CD8-positive, alpha-beta T cell (primary cell): ENCODE measurements at regions of chr1 and their contacts with region 1.

Region 1: DNA sequence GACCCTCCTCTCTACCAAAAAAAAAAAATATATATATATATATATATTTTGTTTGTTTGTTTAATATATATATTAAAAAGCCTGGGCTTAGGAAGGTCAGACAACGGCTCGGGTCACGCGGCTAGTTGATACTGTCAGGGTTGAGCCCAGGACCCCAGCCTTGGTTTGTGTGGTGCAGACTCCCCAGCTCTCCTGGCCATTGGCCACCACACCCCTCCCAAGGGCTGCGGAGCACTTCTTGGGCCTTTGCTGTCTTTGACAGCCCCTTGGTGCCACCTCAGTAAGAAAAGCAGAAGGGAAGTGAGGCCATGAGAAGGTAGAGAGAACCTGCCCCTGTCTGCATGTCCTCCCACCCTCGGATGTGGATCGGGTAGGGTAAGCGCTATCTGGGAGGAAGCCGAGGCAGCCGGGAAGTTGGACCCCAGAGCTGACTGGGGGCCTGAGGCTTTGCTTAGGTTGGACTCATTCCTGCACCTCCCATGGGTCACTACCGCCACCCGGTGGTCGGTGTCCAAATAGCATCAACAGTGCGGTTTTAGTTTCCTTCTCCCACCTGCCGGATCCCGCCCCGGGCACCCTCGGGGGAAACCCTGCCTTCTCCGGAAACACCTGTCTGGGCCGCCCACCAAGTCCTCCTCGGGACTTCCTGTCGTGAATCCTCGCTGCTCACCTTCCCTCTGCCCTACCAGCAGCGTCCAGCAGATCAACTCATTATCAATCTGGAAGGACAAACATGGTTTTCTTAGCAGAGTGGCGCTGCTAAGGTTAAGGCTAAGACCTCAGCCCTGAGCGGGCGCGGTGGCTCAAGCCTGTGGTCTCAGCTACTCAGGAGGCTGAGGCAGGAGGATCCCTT is 29.8 kb upstream of the GNPAT start:
- DNase-seq: peak; percentile 76 to 96 (median 90)
- ATAC-seq: peak; percentile 96
- H3K4me3 ChIP-seq: peak overlapping the region; percentile 42 to 52
- H3K4me3 Mint-ChIP-seq: peak overlapping the region; percentile 83
- H3K27ac ChIP-seq: no peak overlapping the region
- H3K27ac Mint-ChIP-seq: peak overlapping the region; percentile 73
- H3K4me1 ChIP-seq: peaks cover 19% of the 10 kb centered on the region
- H3K4me1 Mint-ChIP-seq: peaks cover 28% of the 10 kb centered on the region
- H3K27me3 ChIP-seq: no peaks in the 10 kb centered on the region
- H3K27me3 Mint-ChIP-seq: no peaks in the 10 kb centered on the region
- CTCF ChIP-seq: peak; percentile 93

Region 2: GRCh38 chr1:230797942-230798418 is 413.3 kb before region 1 on chr1:
- CTCF ChIA-PET with region 1: no interaction called
- POLR2A ChIA-PET with region 1: no interaction called
- intact Hi-C with region 1: loop called (anchors 2 to 5 kb)
- DNase-seq: peak in 2 of 9 experiments; percentile 11 to 21
- ATAC-seq: no peak
- H3K4me3 ChIP-seq: no peak overlapping the region
- H3K4me3 Mint-ChIP-seq: no peak overlapping the region
- H3K27ac ChIP-seq: no peak overlapping the region
- H3K27ac Mint-ChIP-seq: no peak overlapping the region
- H3K4me1 ChIP-seq: no peaks in the 10 kb centered on the region
- H3K4me1 Mint-ChIP-seq: no peaks in the 10 kb centered on the region
- H3K27me3 ChIP-seq: no peaks in the 10 kb centered on the region
- H3K27me3 Mint-ChIP-seq: peaks cover 27% of the 10 kb centered on the region
- CTCF ChIP-seq: no peak

Region 3: GRCh38 chr1:230849451-230850224 is 361.6 kb before region 1 on chr1:
- CTCF ChIA-PET with region 1: no interaction called
- POLR2A ChIA-PET with region 1: no interaction called
- intact Hi-C with region 1: no loop called
- DNase-seq: no peak
- ATAC-seq: no peak
- H3K4me3 ChIP-seq: no peak overlapping the region
- H3K4me3 Mint-ChIP-seq: no peak overlapping the region
- H3K27ac ChIP-seq: no peak overlapping the region
- H3K27ac Mint-ChIP-seq: no peak overlapping the region
- H3K4me1 ChIP-seq: no peaks in the 10 kb centered on the region
- H3K4me1 Mint-ChIP-seq: no peaks in the 10 kb centered on the region
- H3K27me3 ChIP-seq: no peaks in the 10 kb centered on the region
- H3K27me3 Mint-ChIP-seq: no peaks in the 10 kb centered on the region
- CTCF ChIP-seq: no peak

Region 4: GRCh38 chr1:230917284-230918135 is 293.7 kb before region 1 on chr1:
- CTCF ChIA-PET with region 1: interaction called, 42 read pairs
- POLR2A ChIA-PET with region 1: no interaction called
- intact Hi-C with region 1: loop called in 1 of 2 experiments (anchors 1 kb)
- DNase-seq: peak; percentile 41 to 86 (median 80)
- ATAC-seq: peak; percentile 65
- H3K4me3 ChIP-seq: no peak overlapping the region
- H3K4me3 Mint-ChIP-seq: no peak overlapping the region
- H3K27ac ChIP-seq: no peak overlapping the region
- H3K27ac Mint-ChIP-seq: no peak overlapping the region
- H3K4me1 ChIP-seq: no peaks in the 10 kb centered on the region
- H3K4me1 Mint-ChIP-seq: no peaks in the 10 kb centered on the region
- H3K27me3 ChIP-seq: no peaks in the 10 kb centered on the region
- H3K27me3 Mint-ChIP-seq: no peaks in the 10 kb centered on the region
- CTCF ChIP-seq: peak; percentile 84

Region 5: GRCh38 chr1:231091831-231092301 is 119.4 kb before region 1 on chr1:
- CTCF ChIA-PET with region 1: interaction called, 3 read pairs
- POLR2A ChIA-PET with region 1: no interaction called
- intact Hi-C with region 1: loop called in 1 of 2 experiments (anchors 10 kb)
- DNase-seq: peak in 6 of 9 experiments; percentile 7 to 56 (median 44)
- ATAC-seq: no peak
- H3K4me3 ChIP-seq: no peak overlapping the region
- H3K4me3 Mint-ChIP-seq: no peak overlapping the region
- H3K27ac ChIP-seq: no peak overlapping the region
- H3K27ac Mint-ChIP-seq: no peak overlapping the region
- H3K4me1 ChIP-seq: no peaks in the 10 kb centered on the region
- H3K4me1 Mint-ChIP-seq: no peaks in the 10 kb centered on the region
- H3K27me3 ChIP-seq: peaks cover 0 to 5% of the 10 kb centered on the region in 2 experiments
- H3K27me3 Mint-ChIP-seq: peaks cover 22% of the 10 kb centered on the region
- CTCF ChIP-seq: peak; percentile 58

Region 6: GRCh38 chr1:231240883-231241735 is 29.9 kb after region 1 on chr1 and contains the start of gene GNPAT:
- CTCF ChIA-PET with region 1: interaction called, 4 read pairs
- POLR2A ChIA-PET with region 1: interaction called, 3 read pairs
- intact Hi-C with region 1: loop called in 1 of 2 experiments (anchors 2 kb)
- DNase-seq: peak; percentile 84 to 96 (median 91)
- ATAC-seq: peak; percentile 96
- H3K4me3 ChIP-seq: peak within 1 kb of the TSS; percentile 77
- H3K4me3 Mint-ChIP-seq: peak within 1 kb of the TSS; percentile 88
- H3K27ac ChIP-seq: peak within 1 kb of the TSS; percentile 79 to 80
- H3K27ac Mint-ChIP-seq: peak within 1 kb of the TSS; percentile 91
- H3K4me1 ChIP-seq: peaks cover 35% of the 10 kb centered on the region
- H3K4me1 Mint-ChIP-seq: peaks cover 78% of the 10 kb centered on the region
- H3K27me3 ChIP-seq: no peaks in the 10 kb centered on the region
- H3K27me3 Mint-ChIP-seq: no peaks in the 10 kb centered on the region
- CTCF ChIP-seq: no peak
- total RNA-seq, gene GNPAT: 10.4 to 11.0 TPM

Region 7: DNA sequence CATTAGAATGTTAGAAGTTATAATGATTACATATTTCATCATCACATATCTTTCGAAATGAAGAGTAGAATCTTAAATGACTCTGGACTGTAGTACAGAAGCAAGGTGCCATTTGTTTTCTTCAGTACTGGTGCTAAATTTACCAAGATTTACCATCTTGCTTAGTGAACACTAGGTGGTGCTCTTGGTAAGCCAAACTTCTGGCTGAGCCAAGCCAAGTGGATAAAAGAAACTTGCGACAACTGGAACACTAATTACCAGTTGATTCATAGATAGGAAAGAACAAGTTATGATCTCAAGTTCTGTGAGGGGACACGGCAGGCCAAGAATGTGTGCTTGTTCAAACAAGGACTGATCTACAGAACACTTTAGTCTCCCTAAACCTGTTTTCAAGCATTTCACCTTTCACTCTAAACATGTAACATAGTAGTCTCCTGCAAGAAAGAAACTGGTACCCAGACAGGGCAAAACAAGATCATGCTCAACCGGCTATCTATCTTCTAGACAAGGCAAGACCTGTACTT is 146.7 kb after region 1 on chr1:
- CTCF ChIA-PET with region 1: no interaction called
- POLR2A ChIA-PET with region 1: no interaction called
- intact Hi-C with region 1: no loop called
- DNase-seq: peak in 6 of 9 experiments; percentile 27 to 72 (median 45)
- ATAC-seq: peak; percentile 88
- H3K4me3 ChIP-seq: no peak overlapping the region
- H3K4me3 Mint-ChIP-seq: no peak overlapping the region
- H3K27ac ChIP-seq: no peak overlapping the region
- H3K27ac Mint-ChIP-seq: peak overlapping the region; percentile 9
- H3K4me1 ChIP-seq: no peaks in the 10 kb centered on the region
- H3K4me1 Mint-ChIP-seq: peaks cover 6% of the 10 kb centered on the region
- H3K27me3 ChIP-seq: no peaks in the 10 kb centered on the region
- H3K27me3 Mint-ChIP-seq: no peaks in the 10 kb centered on the region
- CTCF ChIP-seq: peak; percentile 71